K562 (cell line): ENCODE measurements at regions of chr6 and their contacts with region 1.

Region 1: GRCh38 chr6:111259089-111259831 is 172.0 kb downstream of the SLC16A10 start:
- DNase-seq: peak; percentile 97 to 100 (median 97)
- ATAC-seq: peak; percentile 92
- H3K4me3 ChIP-seq: peak overlapping the region; percentile 76
- H3K27ac ChIP-seq: peak overlapping the region; percentile 82
- H3K4me1 ChIP-seq: peaks cover 15 to 16% of the 10 kb centered on the region in 2 experiments; a peak in 4 of 5 replicates
- H3K27me3 ChIP-seq: no peaks in the 10 kb centered on the region
- CTCF ChIP-seq: peak; percentile 93 to 99 (median 97)
- EP300 ChIP-seq: peak; percentile 73
- POLR2A ChIP-seq: peak; percentile 84
- RAD21 ChIP-seq: peak; percentile 98

Region 2: DNA sequence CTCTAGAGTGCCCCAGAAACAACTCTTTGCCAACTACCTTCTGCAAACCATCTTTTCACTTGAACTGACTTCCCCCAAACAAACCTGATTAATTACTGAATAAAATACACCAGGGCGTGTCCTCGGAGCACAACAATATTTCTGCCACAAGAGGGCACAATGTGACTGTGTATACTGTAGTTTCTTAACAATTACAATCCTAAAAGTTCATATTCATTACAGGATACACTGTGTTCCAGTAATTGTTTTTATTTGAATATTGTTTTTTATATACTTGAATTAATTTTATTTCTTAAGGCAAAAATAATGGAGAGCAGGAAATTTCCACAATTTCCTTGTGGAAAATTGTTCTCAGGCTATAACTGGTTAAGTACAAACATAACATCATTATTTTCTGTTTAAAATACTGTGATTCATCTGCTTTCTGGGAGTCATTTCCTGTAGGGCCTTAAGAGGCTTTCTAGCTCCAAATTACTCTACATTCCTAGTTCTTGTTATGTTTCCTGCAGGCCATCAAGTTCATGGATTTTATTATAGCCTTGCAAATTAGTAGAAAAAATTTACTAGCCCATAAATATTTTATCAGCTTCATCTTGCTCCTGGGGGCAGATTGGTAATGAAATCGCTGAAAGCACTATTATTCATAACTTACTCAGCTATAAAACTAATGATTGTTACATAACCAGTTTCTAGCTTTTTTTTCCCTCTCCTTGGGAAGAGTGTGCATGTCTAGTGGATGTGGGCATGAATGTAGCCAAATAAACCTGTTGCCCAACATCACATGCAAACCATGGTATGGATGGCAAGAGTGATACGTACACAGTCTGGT is 730.9 kb before region 1 on chr6:
- CTCF ChIA-PET with region 1: interaction called, 4 read pairs
- POLR2A ChIA-PET with region 1: no interaction called
- in situ Hi-C with region 1: no loop called
- intact Hi-C with region 1: loop called (anchors 2 kb)
- DNase-seq: peak; percentile 51 to 70 (median 56)
- ATAC-seq: peak; percentile 91
- H3K4me3 ChIP-seq: no peak overlapping the region
- H3K27ac ChIP-seq: no peak overlapping the region
- H3K4me1 ChIP-seq: no peaks in the 10 kb centered on the region; a peak in 1 of 5 replicates
- H3K27me3 ChIP-seq: peaks cover 5 to 13% of the 10 kb centered on the region in 2 experiments; a peak in 3 of 5 replicates
- CTCF ChIP-seq: peak; percentile 44 to 87 (median 73); a peak in 5 of 6 replicates
- EP300 ChIP-seq: no peak
- POLR2A ChIP-seq: no peak
- RAD21 ChIP-seq: peak; percentile 90 to 92

Region 3: GRCh38 chr6:111057074-111057752 is 202.0 kb before region 1 on chr6:
- CTCF ChIA-PET with region 1: no interaction called
- POLR2A ChIA-PET with region 1: no interaction called
- in situ Hi-C with region 1: no loop called
- intact Hi-C with region 1: loop called (anchors 5 kb)
- DNase-seq: peak; percentile 46 to 61 (median 54)
- ATAC-seq: peak; percentile 92
- H3K4me3 ChIP-seq: no peak overlapping the region
- H3K27ac ChIP-seq: no peak overlapping the region
- H3K4me1 ChIP-seq: no peaks in the 10 kb centered on the region
- H3K27me3 ChIP-seq: no peaks in the 10 kb centered on the region
- CTCF ChIP-seq: peak; percentile 62 to 76 (median 75); a peak in 5 of 6 replicates
- EP300 ChIP-seq: no peak
- POLR2A ChIP-seq: no peak
- RAD21 ChIP-seq: peak; percentile 60 to 76

Region 4: GRCh38 chr6:111483736-111484632 is 224.7 kb after region 1 on chr6:
- CTCF ChIA-PET with region 1: interaction called, 4 read pairs
- POLR2A ChIA-PET with region 1: interaction called, 19 read pairs
- in situ Hi-C with region 1: no loop called
- intact Hi-C with region 1: no loop called
- DNase-seq: peak; percentile 82 to 96 (median 88)
- ATAC-seq: peak; percentile 75
- H3K4me3 ChIP-seq: peak overlapping the region; percentile 87
- H3K27ac ChIP-seq: peak overlapping the region; percentile 96
- H3K4me1 ChIP-seq: peaks cover 0 to 9% of the 10 kb centered on the region in 2 experiments; a peak in 3 of 5 replicates
- H3K27me3 ChIP-seq: no peaks in the 10 kb centered on the region
- CTCF ChIP-seq: no peak
- EP300 ChIP-seq: peak; percentile 48
- POLR2A ChIP-seq: peak; percentile 94
- RAD21 ChIP-seq: peak in 1 of 2 experiments; percentile 24; a peak in 1 of 4 replicates

Region 5: DNA sequence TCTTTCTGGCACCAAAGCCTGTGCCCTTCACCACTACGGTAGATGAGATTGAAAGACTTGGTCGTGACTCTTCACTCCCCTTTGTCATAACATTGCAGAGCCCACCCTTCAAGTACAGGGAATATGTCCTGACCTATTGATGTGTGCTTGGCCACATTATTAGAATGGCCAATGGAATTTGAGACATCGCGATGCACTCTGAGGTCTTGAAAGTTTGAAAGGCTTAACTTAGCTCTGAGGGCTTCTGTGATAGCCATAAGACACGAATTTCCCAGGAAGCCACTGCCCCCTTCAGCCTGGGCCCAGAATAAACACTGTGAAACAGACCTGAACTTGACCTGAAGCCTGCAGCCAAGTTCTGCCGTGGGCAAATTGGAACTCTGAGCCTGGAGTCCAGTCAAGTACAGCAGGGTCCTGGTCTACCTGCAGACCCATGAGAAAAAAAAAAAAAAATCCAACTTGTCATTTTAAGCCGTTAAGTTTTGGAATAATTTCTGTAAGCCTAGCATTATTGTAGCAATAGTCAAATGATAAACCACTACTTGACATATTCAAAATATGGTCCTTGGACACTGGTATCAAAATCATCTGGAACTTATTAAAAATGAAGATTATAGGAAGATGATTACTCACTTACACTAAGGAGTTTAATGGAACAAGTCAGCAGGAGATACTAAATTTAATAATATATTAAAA is 383.4 kb after region 1 on chr6:
- CTCF ChIA-PET with region 1: interaction called, 14 read pairs
- POLR2A ChIA-PET with region 1: interaction called, 4 read pairs
- in situ Hi-C with region 1: loop called (anchors 25 kb)
- intact Hi-C with region 1: loop called (anchors 1 kb)
- DNase-seq: peak in 2 of 4 experiments; percentile 58 to 73
- ATAC-seq: peak; percentile 97
- H3K4me3 ChIP-seq: no peak overlapping the region
- H3K27ac ChIP-seq: no peak overlapping the region
- H3K4me1 ChIP-seq: no peaks in the 10 kb centered on the region
- H3K27me3 ChIP-seq: no peaks in the 10 kb centered on the region
- CTCF ChIP-seq: peak; percentile 77 to 87 (median 83)
- EP300 ChIP-seq: no peak
- POLR2A ChIP-seq: no peak
- RAD21 ChIP-seq: peak; percentile 84 to 91